Panc1 (cell line): ENCODE measurements at regions of chr1 and their contacts with region 1.

Region 1: DNA sequence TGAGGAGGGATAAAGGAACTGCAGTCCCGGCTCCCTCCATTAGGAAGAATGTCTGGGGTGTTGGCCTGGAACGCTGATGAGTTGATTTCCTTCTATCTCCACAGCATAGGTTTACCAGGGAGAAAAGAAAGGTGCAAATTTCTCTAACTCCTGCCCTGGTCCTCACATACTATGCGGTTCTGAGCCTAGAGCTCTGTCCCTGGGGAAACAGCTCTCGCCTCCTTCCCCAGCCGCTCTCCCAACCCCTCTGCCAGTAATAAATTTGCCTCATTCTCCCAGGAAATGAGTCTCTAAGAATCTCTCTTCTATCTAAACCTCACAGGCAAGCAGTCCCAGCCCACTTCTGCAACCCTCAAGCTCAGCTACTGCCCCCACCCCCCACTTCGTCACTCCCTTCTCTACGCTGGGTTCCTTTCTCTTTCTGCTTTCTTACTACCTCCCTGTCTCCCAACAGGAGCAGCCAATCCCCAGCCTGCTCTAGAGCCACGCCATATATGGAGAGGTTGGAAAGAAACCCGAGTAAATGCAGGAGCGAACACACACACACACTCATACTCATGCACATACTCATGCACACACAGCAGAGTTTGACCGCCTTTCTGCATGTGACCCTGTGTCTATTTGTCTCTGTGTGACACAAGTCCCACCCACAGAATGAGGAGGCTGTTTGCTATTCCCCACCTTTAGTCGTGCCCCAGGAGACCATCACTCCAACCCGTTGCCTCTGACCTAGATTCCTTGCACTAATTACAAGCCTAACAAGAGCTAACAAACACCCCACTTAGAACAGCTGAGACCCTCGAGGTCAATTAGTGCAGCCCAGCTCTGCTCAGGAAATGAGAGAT is 13.4 kb downstream of the PLEKHO1 start:
- DNase-seq: no peak
- ATAC-seq: no peak
- H3K4me3 ChIP-seq: no peak overlapping the region
- H3K27ac ChIP-seq: no peak overlapping the region
- H3K4me1 ChIP-seq: no peaks in the 10 kb centered on the region
- H3K27me3 ChIP-seq: no peaks in the 10 kb centered on the region
- CTCF ChIP-seq: no peak

Region 2: GRCh38 chr1:150149271-150150132 is 13.6 kb before region 1 on chr1 and contains the start of gene PLEKHO1:
- CTCF ChIA-PET with region 1: no interaction called
- POLR2A ChIA-PET with region 1: interaction called, 21 read pairs
- in situ Hi-C with region 1: no loop called
- intact Hi-C with region 1: no loop called
- DNase-seq: no peak
- ATAC-seq: peak; percentile 86
- H3K4me3 ChIP-seq: peak within 1 kb of the TSS; percentile 56 to 66
- H3K27ac ChIP-seq: peak within 1 kb of the TSS; percentile 31; the same call in 1 of the 2 replicates
- H3K4me1 ChIP-seq: peaks cover 11% of the 10 kb centered on the region
- H3K27me3 ChIP-seq: no peaks in the 10 kb centered on the region
- CTCF ChIP-seq: no peak
- total RNA-seq, gene PLEKHO1: 9.1 TPM

Region 3: DNA sequence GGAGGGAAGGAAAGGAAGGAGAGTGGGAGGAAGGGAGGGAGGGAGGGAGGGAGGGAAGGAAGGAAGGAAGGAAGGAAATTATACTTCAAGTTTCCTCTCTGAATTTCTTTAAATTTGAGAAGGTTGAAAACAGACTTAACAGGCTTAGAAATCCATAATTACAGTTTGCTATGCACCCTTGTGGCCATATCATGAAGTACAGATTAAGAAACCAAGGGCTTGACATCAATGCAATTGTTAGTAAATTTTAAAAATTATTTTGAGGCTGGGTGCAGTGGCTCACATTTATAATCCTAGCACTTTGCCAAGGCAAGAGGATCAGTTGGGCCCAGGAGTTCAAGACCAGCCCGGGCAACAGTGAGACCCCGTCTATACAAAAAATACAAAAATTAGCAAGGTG is 58.5 kb after region 1 on chr1:
- CTCF ChIA-PET with region 1: interaction called, 10 read pairs
- POLR2A ChIA-PET with region 1: no interaction called
- in situ Hi-C with region 1: no loop called
- intact Hi-C with region 1: no loop called
- DNase-seq: no peak
- ATAC-seq: no peak; the same call in 1 of the 2 replicates
- H3K4me3 ChIP-seq: no peak overlapping the region
- H3K27ac ChIP-seq: no peak overlapping the region
- H3K4me1 ChIP-seq: no peaks in the 10 kb centered on the region
- H3K27me3 ChIP-seq: no peaks in the 10 kb centered on the region
- CTCF ChIP-seq: no peak; the same call in 1 of the 2 replicates